Activated CD4-positive, alpha-beta memory T cell treated with anti-CD3 and anti-CD28 coated beads for 36 hours (primary cell): ENCODE measurements at regions of chr7 and their contacts with region 1.

Region 1: GRCh38 chr7:51141451-51142003 is 175.1 kb downstream of the COBL start:
- DNase-seq: peak; percentile 27
- H3K4me3 Mint-ChIP-seq: no peak overlapping the region
- H3K27ac Mint-ChIP-seq: no peak overlapping the region
- H3K4me1 Mint-ChIP-seq: peaks cover 17% of the 10 kb centered on the region
- H3K27me3 Mint-ChIP-seq: peaks cover 5% of the 10 kb centered on the region

Region 2: DNA sequence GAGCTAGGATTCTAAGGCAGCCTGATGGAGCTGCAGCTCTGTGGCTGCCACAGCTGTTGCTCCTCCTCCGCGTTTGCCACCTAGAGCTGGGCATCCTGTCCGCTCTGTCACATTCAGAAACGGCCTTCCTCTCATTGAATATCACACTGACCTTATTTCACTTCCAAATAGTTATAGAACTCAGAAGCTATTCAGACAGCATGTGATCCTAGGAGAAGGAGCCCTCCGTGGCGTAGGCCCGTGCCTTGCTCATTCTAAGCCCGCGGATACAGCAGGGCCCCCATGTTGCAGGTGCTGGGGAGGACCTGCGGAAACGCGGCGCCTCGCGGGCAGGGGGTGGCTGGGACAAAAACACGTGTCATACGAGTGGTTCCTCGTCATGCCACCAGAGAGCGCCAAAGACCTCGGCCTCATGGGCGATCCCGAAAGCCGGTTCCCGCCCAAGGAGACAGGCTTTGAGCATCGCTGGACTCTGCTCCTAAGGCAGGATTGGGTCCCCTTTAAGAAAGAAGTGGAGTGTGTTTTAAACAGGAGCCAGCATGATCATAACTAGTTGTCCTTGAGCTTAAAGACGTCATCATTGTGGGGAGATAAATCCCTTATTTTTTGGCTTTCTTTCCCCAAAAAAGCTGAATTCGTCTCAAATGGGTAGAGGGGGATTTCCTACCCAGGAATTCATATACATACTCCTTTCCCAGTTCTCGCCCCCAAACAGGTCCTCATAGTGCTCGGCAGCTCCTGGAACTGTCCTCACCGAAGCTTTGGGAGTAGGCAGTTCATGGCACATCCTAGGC is 673.5 kb before region 1 on chr7:
- CTCF ChIA-PET with region 1: interaction called, 37 read pairs
- POLR2A ChIA-PET with region 1: no interaction called
- intact Hi-C with region 1: loop called (anchors 1 kb)
- DNase-seq: peak; percentile 89
- H3K4me3 Mint-ChIP-seq: no peak overlapping the region
- H3K27ac Mint-ChIP-seq: no peak overlapping the region
- H3K4me1 Mint-ChIP-seq: peaks cover 12% of the 10 kb centered on the region
- H3K27me3 Mint-ChIP-seq: peaks cover 2% of the 10 kb centered on the region

Region 3: GRCh38 chr7:50632561-50633413 is 508.7 kb before region 1 on chr7:
- CTCF ChIA-PET with region 1: interaction called, 13 read pairs
- POLR2A ChIA-PET with region 1: no interaction called
- intact Hi-C with region 1: no loop called
- DNase-seq: peak; percentile 65
- H3K4me3 Mint-ChIP-seq: no peak overlapping the region
- H3K27ac Mint-ChIP-seq: no peak overlapping the region
- H3K4me1 Mint-ChIP-seq: peaks cover 7% of the 10 kb centered on the region
- H3K27me3 Mint-ChIP-seq: peaks cover 2% of the 10 kb centered on the region

Region 4: GRCh38 chr7:50679218-50680007 is 462.1 kb before region 1 on chr7:
- CTCF ChIA-PET with region 1: interaction called, 28 read pairs
- POLR2A ChIA-PET with region 1: no interaction called
- intact Hi-C with region 1: no loop called
- DNase-seq: no peak
- H3K4me3 Mint-ChIP-seq: no peak overlapping the region
- H3K27ac Mint-ChIP-seq: no peak overlapping the region
- H3K4me1 Mint-ChIP-seq: no peaks in the 10 kb centered on the region
- H3K27me3 Mint-ChIP-seq: no peaks in the 10 kb centered on the region

Region 5: DNA sequence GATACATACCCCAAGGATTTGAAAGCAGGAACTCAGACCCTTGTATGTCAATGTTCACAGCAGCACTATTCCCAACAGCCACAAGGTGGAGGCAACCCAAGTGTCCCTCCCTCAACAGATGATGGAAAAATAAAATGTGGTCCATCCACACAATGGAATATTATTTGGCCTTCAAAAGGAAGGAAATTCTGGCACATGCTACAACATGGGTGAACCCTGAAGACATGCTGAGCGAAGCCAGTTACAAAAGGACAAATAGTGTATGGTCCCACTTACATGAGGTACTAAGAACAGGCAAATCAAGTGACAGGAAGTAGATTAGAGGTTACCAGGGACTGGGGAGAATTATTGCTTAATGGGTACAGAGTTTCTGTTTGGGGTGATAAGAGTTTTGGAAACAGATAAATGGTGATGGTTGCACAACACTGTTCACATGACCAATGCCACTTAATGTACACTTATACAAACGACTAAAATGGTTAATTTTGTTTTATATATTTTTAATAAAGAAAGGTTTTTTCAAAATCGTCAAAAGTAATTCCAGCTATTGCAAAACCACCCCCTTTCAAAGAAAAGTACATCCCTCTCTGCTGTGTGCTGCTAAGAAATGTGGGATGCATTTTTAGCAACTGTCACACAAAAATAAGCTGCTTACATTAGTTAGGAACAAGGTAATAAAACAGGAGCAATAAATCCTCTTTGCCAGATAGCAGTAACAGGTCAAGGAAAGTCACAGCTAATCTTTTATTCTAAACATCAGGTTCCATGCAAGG is 444.5 kb before region 1 on chr7:
- CTCF ChIA-PET with region 1: interaction called, 5 read pairs
- POLR2A ChIA-PET with region 1: no interaction called
- intact Hi-C with region 1: loop called (anchors 1 kb)
- DNase-seq: no peak
- H3K4me3 Mint-ChIP-seq: no peak overlapping the region
- H3K27ac Mint-ChIP-seq: no peak overlapping the region
- H3K4me1 Mint-ChIP-seq: peaks cover 11% of the 10 kb centered on the region
- H3K27me3 Mint-ChIP-seq: no peaks in the 10 kb centered on the region

Region 6: GRCh38 chr7:50782384-50783208 is 358.9 kb before region 1 on chr7 and contains the start of gene GRB10:
- CTCF ChIA-PET with region 1: no interaction called
- POLR2A ChIA-PET with region 1: no interaction called
- intact Hi-C with region 1: loop called (anchors 5 kb)
- DNase-seq: no peak
- H3K4me3 Mint-ChIP-seq: peak within 1 kb of the TSS; percentile 65
- H3K27ac Mint-ChIP-seq: no peak within 1 kb of the TSS
- H3K4me1 Mint-ChIP-seq: peaks cover 21% of the 10 kb centered on the region
- H3K27me3 Mint-ChIP-seq: peaks cover 7% of the 10 kb centered on the region
- total RNA-seq, gene GRB10: 8.4 to 9.9 TPM

Region 7: DNA sequence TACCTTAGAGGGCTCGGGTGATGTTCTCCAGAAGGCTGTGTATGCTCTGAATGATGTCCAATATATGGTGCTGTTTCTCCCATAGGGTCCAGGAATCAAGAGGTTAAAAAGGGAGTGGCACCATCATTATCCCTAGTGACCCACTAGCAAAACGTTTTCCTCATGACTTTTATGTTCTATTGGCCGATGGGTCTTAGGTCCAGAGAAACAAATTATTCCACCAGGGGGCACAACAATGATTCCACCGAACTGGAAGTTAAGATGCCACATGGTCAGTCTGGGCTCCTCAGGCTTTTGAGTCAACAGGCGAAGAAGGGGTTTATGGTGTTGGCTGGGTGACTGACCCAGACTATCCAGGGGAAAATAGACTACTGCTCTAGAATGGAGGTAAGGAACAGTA is 81.0 kb before region 1 on chr7:
- CTCF ChIA-PET with region 1: interaction called, 17 read pairs
- POLR2A ChIA-PET with region 1: no interaction called
- intact Hi-C with region 1: loop called (anchors 2 kb)
- DNase-seq: no peak
- H3K4me3 Mint-ChIP-seq: no peak overlapping the region
- H3K27ac Mint-ChIP-seq: no peak overlapping the region
- H3K4me1 Mint-ChIP-seq: no peaks in the 10 kb centered on the region
- H3K27me3 Mint-ChIP-seq: no peaks in the 10 kb centered on the region